ENCODE measurements at regions of chr13 and their contacts with region 1.

Region 1: DNA sequence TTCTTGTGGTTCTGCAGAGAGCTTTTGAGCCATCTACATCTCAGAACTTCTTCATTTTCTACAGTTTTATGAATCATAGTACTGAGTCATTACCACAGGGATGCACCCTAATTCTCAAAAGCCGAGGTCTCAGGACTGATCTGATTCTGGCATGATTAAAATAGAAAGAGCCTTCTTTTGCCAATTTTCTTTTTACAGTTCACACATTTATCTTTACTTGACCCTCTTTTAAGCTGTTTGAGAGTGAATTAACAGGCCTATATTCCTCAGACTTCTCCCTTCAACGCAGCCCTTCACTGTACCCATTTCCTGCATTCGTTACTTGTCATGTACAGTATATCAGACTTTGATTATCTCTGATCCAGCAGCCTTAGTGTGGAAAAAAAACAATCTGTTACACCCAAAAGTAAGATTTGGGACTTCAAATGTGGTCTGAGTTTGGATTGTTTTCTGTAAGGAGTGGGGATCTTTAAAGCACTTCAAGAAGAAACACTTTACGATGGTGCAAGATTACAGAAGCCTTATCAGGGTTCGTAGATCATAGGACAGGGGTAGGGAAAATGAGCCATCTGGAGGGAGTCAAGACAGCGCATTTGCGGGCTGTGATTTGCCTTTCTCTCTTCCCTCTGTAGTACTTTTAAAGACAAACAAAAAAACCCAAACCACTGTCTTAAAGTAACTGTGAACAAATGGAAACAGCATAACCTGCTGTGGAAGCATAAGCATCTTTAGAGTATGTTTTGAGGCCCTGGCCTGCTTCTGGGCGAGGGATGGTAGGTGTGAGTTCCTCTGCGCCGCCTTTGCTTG is 15.3 kb upstream of the GPR183 start:
- DNase-seq: no peak
- ATAC-seq: peak; percentile 74
- H3K4me3 ChIP-seq: no peak overlapping the region
- H3K27ac ChIP-seq: no peak overlapping the region
- H3K4me1 ChIP-seq: peaks cover 3% of the 10 kb centered on the region in 2 donors
- H3K27me3 ChIP-seq: no peaks in the 10 kb centered on the region

Region 2: GRCh38 chr13:98133946-98134345 is 1188.6 kb before region 1 on chr13:
- intact Hi-C with region 1: no loop called
- DNase-seq: no peak
- ATAC-seq: no peak
- H3K4me3 ChIP-seq: no peak overlapping the region
- H3K27ac ChIP-seq: no peak overlapping the region
- H3K4me1 ChIP-seq: no peaks in the 10 kb centered on the region
- H3K27me3 ChIP-seq: peaks cover 0 to 2% of the 10 kb centered on the region in 2 donors

Region 3: GRCh38 chr13:99281811-99282263 is 40.7 kb before region 1 on chr13:
- intact Hi-C with region 1: loop called in 1 of 2 experiments (anchors 5 kb)
- DNase-seq: peak; percentile 82 to 88
- ATAC-seq: peak; percentile 83
- H3K4me3 ChIP-seq: no peak overlapping the region
- H3K27ac ChIP-seq: peak overlapping the region in 1 of 2 donors; percentile 40
- H3K4me1 ChIP-seq: no peaks in the 10 kb centered on the region
- H3K27me3 ChIP-seq: no peaks in the 10 kb centered on the region

Region 4: GRCh38 chr13:99339736-99340397 is 17.4 kb after region 1 on chr13:
- intact Hi-C with region 1: no loop called
- DNase-seq: no peak
- ATAC-seq: no peak
- H3K4me3 ChIP-seq: no peak overlapping the region
- H3K27ac ChIP-seq: no peak overlapping the region
- H3K4me1 ChIP-seq: no peaks in the 10 kb centered on the region
- H3K27me3 ChIP-seq: no peaks in the 10 kb centered on the region

Region 5: DNA sequence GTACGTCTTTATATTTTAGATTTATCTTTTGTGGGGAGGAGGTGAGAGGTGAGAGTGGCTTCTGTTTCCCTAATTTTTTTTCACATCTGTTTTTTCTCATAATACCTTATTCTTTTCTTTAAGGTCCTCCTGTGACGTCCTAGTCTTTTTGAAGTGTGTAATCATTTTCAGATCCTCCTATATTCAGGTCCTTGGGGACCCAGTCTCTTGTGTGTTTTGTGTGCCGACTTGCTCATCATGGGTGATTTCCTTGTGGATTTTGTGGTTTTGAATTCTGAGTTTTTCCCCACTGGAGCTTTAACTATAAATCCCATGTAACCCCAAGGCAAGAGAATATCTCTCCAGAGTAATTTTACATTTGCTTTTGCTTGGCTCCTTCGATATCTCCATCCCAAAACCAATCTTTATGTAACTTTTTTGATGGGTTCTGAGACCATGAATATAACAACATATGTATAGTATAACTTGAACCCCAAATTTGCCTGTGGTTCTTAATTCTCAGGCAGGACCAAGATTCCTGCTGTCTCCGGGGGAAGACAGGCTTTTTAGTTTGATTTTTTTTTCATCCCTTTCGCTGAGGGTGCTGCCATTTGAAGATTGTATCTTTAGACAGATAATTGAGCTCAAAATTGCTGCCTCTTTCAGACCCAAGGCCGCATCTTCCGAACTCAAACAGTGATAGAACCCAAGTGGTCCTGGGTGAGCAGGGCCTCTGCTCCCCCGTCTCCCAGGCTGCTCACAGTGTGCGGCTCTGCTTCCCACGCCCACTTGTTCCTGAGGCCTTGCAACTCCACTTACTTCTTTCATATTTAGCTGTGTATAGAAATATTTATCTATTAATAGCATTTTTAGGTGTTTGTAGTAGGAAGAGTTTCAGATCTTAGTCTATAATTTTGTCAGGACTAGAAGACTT is 43.8 kb after region 1 on chr13:
- intact Hi-C with region 1: loop called in 1 of 2 experiments (anchors 5 kb)
- DNase-seq: no peak
- ATAC-seq: no peak
- H3K4me3 ChIP-seq: no peak overlapping the region
- H3K27ac ChIP-seq: no peak overlapping the region
- H3K4me1 ChIP-seq: no peaks in the 10 kb centered on the region
- H3K27me3 ChIP-seq: no peaks in the 10 kb centered on the region